PC-9 (cell line): ENCODE measurements at regions of chr12 and their contacts with region 1.

Region 1: DNA sequence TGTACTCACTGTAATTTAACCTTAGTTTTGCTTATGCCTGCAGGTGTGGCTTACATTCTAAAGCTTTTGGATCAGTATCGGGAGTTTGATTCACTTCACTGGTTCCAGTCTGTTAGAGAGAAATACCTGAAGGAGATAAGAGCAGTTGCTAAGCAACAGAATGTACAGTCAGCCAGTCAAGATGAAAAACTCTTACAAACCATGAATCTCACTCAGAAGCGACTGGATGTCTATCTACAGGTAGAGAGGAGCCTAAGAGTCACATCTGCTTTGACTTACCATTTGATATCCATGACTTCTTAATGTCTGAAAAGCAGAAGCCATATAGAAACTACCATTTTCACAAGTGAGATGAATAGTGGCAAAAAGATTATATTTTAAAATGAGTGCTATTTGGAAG is 56.5 kb downstream of the WASHC4 start:
- DNase-seq: no peak
- H3K4me3 ChIP-seq: no peak overlapping the region
- H3K27ac ChIP-seq: no peak overlapping the region
- H3K4me1 ChIP-seq: no peaks in the 10 kb centered on the region
- H3K27me3 ChIP-seq: no peaks in the 10 kb centered on the region
- CTCF ChIP-seq: no peak

Region 2: DNA sequence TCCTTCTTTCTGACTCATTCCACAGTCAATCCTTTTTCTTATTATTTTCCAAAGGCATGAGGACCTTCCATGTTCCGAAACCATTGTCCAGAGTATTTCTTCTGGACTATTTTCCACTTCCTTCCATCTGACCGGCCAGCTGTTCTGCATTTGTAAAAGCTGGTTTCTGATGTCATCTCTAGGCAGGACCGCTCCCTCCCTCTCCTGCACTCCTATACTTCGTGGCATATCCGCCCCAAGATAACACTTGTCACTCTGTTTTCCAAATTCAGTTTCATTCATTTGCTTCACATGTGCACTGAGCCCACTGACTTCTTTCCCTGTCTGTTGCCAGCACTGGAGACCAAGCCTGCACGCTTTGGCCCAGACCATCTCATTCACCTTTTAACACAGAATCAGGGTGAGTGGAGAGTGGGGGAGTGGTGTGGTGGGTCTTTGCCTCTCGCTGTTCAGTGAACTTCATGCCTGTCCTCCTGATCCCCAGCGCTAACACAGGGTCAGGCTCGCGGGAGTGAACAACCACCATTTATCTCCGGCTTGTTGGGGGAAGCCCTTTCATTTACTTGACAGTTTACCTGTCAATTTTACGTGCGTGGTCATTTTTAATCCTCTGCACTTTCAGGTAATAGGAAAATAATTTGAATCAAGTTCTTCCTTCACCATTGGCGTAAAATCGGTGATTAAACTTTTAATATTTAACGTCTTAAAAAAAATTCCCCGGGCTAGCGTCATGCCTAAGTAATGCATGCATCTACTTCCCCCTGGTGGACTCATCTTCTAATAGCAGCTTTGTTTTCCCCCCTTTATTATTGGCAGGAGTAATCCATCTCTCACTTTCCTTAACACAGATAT is 218.9 kb after region 1 on chr12:
- CTCF ChIA-PET with region 1: no interaction called
- POLR2A ChIA-PET with region 1: no interaction called
- intact Hi-C with region 1: loop called (anchors 10 kb)
- DNase-seq: peak; percentile 7 to 59
- H3K4me3 ChIP-seq: no peak overlapping the region
- H3K27ac ChIP-seq: no peak overlapping the region
- H3K4me1 ChIP-seq: peaks cover 7% of the 10 kb centered on the region; the same call in 1 of the 2 replicates
- H3K27me3 ChIP-seq: 0 out of 2 replicates have a peak, but pooled peaks cover 11% of the 10 kb centered on the region
- CTCF ChIP-seq: peak; percentile 82